H1 (cell line): ENCODE measurements at regions of chr22 and their contacts with region 1.

Region 1: DNA sequence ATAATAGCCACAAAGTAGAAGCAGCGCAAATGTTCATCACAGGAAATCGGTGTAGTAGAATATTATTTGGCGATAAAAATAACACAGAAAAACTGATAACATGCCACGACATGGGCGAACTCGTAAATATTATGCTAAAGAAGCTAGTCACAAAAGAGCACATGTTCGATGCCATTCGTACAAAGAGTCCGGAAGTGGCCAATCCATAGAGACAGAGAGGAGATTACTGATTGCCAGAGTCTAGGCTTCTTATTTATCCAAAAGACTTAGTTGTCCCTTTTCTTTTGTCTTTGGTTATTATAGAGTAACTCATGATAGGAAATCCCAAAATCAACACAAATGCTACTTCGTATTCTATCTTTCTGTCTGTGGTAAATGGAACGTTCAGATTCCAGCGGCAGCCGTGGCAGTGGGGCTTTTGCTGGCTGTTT is 56.5 kb downstream of the MED15 start:
- DNase-seq: no peak
- H3K4me3 ChIP-seq: no peak overlapping the region
- H3K27ac ChIP-seq: no peak overlapping the region
- H3K4me1 ChIP-seq: no peaks in the 10 kb centered on the region
- H3K27me3 ChIP-seq: no peaks in the 10 kb centered on the region
- CTCF ChIP-seq: no peak
- EP300 ChIP-seq: no peak
- POLR2A ChIP-seq: no peak
- RAD21 ChIP-seq: no peak

Region 2: GRCh38 chr22:20600137-20600673 is 36.2 kb after region 1 on chr22:
- CTCF ChIA-PET with region 1: interaction called, 366 read pairs
- POLR2A ChIA-PET with region 1: no interaction called
- DNase-seq: no peak
- H3K4me3 ChIP-seq: no peak overlapping the region
- H3K27ac ChIP-seq: no peak overlapping the region
- H3K4me1 ChIP-seq: no peaks in the 10 kb centered on the region
- H3K27me3 ChIP-seq: no peaks in the 10 kb centered on the region
- CTCF ChIP-seq: no peak
- EP300 ChIP-seq: no peak
- POLR2A ChIP-seq: no peak
- RAD21 ChIP-seq: no peak

Region 3: DNA sequence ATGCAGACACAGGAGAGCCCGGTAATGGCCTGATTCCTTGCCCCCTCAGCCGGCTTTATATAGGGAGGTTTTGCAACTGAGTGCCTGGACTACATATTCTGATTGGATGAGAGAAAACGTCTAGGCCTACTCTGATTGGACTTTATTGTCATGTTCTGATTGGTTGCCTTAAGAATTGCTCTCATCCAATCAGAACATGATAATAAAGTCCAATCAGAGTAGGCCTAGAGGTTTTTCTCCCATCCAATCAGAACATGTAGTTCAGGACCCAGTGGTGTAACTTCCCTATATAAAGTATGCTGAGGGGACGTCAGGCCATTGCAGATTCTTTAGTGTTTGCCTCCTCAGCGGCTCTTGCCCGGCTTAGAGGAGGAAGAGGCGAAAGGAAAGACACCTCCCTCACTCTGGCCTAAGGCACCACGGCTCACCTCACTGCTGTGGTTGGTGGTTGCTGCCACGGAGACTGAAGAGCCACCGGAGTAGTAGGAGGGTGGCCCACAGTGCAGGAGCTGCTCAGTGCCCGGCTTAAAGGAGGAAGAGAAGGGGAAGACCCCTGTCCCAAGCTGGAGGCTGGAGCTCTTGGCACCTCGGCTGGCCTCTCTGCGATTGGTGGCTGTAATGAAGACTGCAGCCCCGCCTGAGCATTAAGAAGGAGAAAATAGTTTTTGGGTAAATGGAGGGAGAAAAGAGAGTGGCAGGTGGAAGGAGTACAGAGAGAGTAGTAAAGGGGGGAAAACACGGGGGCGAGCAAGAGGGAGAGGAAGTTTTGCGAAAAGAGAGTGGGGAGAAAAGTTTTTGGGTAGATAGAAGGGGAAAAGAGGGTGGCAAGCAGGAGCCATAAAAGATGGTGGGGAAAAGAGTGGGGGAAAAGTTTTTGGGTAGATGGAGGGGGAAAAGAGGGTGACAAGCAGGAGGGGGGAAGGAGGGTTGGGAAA is 93.2 kb after region 1 on chr22:
- CTCF ChIA-PET with region 1: no interaction called
- POLR2A ChIA-PET with region 1: no interaction called
- DNase-seq: peak in 1 of 2 experiments; percentile 16
- H3K4me3 ChIP-seq: no peak overlapping the region
- H3K27ac ChIP-seq: no peak overlapping the region
- H3K4me1 ChIP-seq: no peaks in the 10 kb centered on the region
- H3K27me3 ChIP-seq: no peaks in the 10 kb centered on the region
- CTCF ChIP-seq: no peak
- EP300 ChIP-seq: no peak
- POLR2A ChIP-seq: no peak
- RAD21 ChIP-seq: no peak